HCT116 (cell line): ENCODE measurements at regions of chr9 and their contacts with region 1.

Region 1: GRCh38 chr9:38068866-38069629 is at the start of gene SHB:
- DNase-seq: no peak
- ATAC-seq: peak; percentile 74
- H3K4me3 ChIP-seq: peak within 1 kb of the TSS; percentile 66 to 84
- H3K27ac ChIP-seq: peak within 1 kb of the TSS; percentile 98
- H3K4me1 ChIP-seq: peaks cover 37 to 52% of the 10 kb centered on the region in 2 experiments; a peak in 3 of 4 replicates
- H3K27me3 ChIP-seq: no peaks in the 10 kb centered on the region
- CTCF ChIP-seq: peak in 1 of 3 experiments; percentile 33; a peak in 1 of 6 replicates
- POLR2A ChIP-seq: peak; percentile 62
- RAD21 ChIP-seq: no peak
- total RNA-seq, gene SHB: 28.7 TPM

Region 2: DNA sequence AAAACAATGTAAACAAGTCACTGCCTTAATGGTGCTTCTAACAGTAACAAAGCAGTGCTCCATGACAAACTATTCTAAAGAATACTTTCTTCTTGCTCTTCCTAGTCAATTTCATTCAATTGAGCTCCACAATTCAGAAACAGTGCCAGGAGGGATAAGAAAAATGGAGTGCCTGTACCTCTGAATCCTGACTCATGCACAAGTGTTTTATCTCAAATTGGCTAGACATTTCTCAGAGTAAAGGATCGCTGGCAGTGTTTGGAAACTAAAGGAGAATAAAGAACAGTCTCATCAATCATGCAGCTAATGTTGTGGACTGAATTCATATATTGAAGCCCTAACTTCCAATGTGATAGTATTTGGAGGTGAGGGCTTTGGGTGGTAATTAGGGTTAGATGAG is 192.7 kb before region 1 on chr9:
- CTCF ChIA-PET with region 1: no interaction called
- POLR2A ChIA-PET with region 1: no interaction called
- RAD21 ChIA-PET with region 1: no interaction called
- intact Hi-C with region 1: no loop called
- DNase-seq: no peak
- ATAC-seq: no peak
- H3K4me3 ChIP-seq: no peak overlapping the region
- H3K27ac ChIP-seq: no peak overlapping the region
- H3K4me1 ChIP-seq: no peaks in the 10 kb centered on the region
- H3K27me3 ChIP-seq: no peaks in the 10 kb centered on the region
- CTCF ChIP-seq: no peak
- POLR2A ChIP-seq: no peak
- RAD21 ChIP-seq: no peak

Region 3: DNA sequence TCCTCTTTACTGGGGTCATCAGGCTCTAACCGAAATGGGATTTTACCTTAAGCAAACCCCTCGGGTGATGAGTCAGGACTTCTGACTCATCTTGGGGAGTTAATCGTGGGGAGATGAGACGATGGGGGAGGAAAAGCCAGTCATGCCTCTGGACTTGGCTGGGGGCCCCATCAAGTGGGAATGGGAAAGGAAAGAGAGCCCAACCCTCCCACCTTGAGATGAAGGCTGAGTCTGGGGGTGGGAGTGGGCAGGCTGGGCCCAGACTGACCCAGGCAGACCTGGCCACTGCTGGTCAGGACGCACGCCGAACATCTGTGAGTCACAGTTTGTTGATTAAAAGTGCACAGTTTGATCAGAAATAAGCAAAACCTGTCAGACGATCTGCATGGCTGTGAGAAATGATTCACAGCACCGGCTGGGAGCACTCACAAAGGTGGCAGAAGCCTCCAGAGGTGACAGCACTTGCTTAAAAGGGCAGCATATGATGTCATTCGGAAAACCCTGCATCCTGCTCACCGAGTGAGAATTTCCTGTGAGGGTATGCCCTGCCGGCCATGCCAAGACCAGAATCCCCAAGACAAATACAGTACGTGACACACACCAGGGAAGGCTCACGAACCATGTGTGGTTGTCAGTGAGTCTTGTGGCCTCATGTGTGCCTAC is 115.1 kb before region 1 on chr9:
- CTCF ChIA-PET with region 1: no interaction called
- POLR2A ChIA-PET with region 1: no interaction called
- RAD21 ChIA-PET with region 1: no interaction called
- intact Hi-C with region 1: loop called (anchors 5 kb)
- DNase-seq: peak; percentile 87
- ATAC-seq: peak; percentile 73
- H3K4me3 ChIP-seq: peak overlapping the region; percentile 15 to 45; a peak in 3 of 4 replicates
- H3K27ac ChIP-seq: peak overlapping the region; percentile 84
- H3K4me1 ChIP-seq: peaks cover 44 to 87% of the 10 kb centered on the region in 2 experiments
- H3K27me3 ChIP-seq: no peaks in the 10 kb centered on the region
- CTCF ChIP-seq: no peak
- POLR2A ChIP-seq: no peak
- RAD21 ChIP-seq: no peak

Region 4: DNA sequence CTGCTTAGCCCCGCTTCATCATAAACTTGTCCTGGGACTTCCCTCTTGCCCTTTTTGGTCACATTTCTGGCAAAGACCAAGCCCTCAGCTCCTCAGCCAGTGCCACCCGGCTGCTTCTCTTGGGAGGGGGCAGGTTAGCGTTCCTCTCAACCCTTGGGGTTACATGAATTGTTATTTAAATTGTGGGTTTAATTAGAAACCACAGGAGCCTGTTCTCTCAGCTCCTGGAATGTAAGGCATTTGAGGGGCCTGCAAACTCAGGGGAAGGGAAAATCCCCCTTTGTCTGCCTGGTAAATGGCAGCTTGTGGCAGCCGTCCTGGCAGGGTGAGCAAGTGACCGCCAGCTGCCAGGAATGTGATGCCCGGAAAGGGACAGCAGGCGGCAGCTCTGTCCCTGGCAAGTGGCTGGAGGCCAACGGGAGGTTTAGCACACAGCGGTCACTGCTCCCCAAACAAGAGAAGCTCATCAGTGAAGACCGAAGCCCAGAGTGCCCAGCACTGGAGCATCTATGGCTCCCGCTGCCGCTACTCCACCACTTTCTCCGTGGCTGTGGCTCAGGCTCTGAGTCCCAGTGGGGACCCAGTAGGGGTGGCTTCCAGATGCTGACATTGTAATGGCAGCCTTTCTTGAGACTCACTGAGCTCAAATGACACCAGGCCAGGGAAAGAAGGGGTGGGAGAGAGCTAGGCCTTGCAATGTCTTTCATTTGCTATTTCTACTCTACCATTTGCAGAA is 51.7 kb before region 1 on chr9:
- CTCF ChIA-PET with region 1: no interaction called
- POLR2A ChIA-PET with region 1: no interaction called
- RAD21 ChIA-PET with region 1: no interaction called
- intact Hi-C with region 1: loop called (anchors 10 kb)
- DNase-seq: no peak
- ATAC-seq: no peak
- H3K4me3 ChIP-seq: no peak overlapping the region
- H3K27ac ChIP-seq: no peak overlapping the region
- H3K4me1 ChIP-seq: peaks cover 16 to 39% of the 10 kb centered on the region in 2 experiments; a peak in 3 of 4 replicates
- H3K27me3 ChIP-seq: no peaks in the 10 kb centered on the region
- CTCF ChIP-seq: 0 out of 6 replicates have a peak, but pooled peaks of 1 of the 3 experiments have one; percentile 8
- POLR2A ChIP-seq: no peak
- RAD21 ChIP-seq: peak; percentile 40